ENCODE measurements at regions of chr1 and their contacts with region 1.

Region 1: GRCh38 chr1:29793101-29793546 is 556.8 kb downstream of the PTPRU start:
- DNase-seq: peak; percentile 78
- ATAC-seq: peak; percentile 83

Region 2: DNA sequence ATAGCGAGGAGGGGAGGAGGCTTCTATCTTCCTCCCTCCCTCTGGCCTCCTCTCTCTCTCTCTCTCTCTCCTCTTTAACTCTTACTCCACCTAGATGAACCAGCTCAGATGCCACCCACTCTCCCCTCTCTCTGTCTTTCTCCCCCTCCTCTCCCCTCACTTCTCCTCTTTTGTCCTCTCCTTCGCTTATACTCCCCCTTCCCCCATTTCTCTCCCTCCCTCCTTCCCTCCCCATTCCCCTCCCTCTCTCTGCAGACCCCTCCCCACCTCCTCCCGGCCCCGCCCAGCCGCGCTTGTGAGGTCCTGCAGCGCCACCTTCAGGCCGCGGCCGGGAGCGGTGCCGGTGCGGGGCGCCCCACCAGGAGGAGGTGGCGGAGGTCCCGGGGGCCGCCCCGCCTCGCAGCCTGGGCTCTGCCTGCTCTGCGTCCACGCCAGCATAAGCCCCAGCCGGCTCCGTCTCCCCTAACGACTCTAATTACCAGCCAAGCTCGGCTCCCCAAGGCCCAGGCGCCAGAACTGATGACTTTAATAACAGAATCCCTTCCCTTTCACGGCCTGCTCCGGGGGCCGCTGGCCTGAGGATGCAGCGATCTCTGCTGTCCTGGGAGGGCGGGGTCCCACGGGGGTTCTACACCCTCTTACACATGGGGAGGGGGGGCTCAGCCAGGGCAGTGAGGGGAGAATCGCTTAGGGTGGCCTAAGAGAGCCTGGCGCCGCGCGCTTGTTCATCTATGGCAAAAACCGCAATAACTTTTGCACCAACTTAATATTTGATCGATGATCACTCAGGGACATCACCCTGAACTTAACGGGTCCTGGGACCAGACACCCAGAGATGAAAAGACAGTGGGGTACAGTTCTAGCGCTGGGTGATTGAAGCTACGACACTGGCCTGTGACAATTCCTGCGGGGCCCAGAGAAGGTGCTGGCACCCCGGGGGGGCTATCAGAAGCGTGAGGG is 293.0 kb after region 1 on chr1:
- intact Hi-C with region 1: loop called (anchors 10 kb)
- DNase-seq: peak; percentile 78
- ATAC-seq: peak; percentile 61

Measured in left ventricle myocardium superior (tissue), 1 donor.